ENCODE measurements at regions of chr1 and their contacts with region 1.

Region 1: DNA sequence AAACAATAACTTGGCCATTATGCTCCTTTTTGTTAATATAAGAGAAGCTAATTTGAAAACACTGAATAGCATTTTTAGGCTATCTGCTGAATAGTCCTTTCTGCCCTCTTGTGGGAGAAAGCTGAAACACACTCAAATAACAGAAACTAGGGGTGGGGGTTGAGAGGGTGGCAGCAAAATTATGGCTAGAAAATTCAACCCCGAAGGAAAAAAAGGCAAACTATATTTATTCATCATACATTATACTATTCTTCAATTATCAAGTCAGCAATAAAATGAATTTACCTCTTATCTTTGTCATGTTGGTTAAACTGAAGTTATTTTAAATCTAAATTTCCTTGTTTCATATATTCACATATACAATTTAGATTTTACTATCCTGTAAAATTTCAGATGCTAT is 255.9 kb downstream of the FAF1 start:
- DNase-seq: peak; percentile 58
- H3K4me3 ChIP-seq: no peak overlapping the region
- H3K27ac ChIP-seq: no peak overlapping the region
- H3K4me1 ChIP-seq: no peaks in the 10 kb centered on the region
- H3K27me3 ChIP-seq: no peaks in the 10 kb centered on the region
- CTCF ChIP-seq: peak; percentile 53 to 60
- POLR2A ChIP-seq: no peak

Region 2: DNA sequence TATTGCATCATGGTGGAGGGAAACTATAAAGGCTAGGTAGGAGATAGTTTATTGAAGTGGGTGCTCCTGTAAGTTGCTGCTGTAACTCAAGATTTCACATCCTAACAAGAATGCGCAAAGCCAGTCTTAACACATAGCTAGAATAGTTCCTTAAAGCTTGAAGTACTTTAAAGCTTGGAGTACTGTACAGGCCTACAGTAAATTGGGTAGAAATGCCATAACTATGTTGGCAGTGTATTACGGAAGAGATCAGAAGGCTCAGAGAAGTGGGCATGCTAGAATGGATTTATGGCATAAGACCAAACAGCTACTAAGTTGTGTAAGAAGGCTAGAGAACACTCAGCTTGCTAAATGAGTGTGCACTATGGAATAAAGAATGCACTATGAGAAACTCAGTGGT is 325.4 kb before region 1 on chr1:
- CTCF ChIA-PET with region 1: interaction called, 10 read pairs
- POLR2A ChIA-PET with region 1: no interaction called
- dilution Hi-C with region 1: no loop called
- intact Hi-C with region 1: no loop called
- DNase-seq: no peak
- H3K4me3 ChIP-seq: no peak overlapping the region
- H3K27ac ChIP-seq: no peak overlapping the region
- H3K4me1 ChIP-seq: no peaks in the 10 kb centered on the region
- H3K27me3 ChIP-seq: no peaks in the 10 kb centered on the region
- CTCF ChIP-seq: no peak
- POLR2A ChIP-seq: no peak

Region 3: GRCh38 chr1:50450861-50451653 is 253.1 kb before region 1 on chr1:
- CTCF ChIA-PET with region 1: no interaction called
- POLR2A ChIA-PET with region 1: no interaction called
- dilution Hi-C with region 1: no loop called
- intact Hi-C with region 1: no loop called
- DNase-seq: no peak
- H3K4me3 ChIP-seq: no peak overlapping the region
- H3K27ac ChIP-seq: no peak overlapping the region
- H3K4me1 ChIP-seq: no peaks in the 10 kb centered on the region
- H3K27me3 ChIP-seq: no peaks in the 10 kb centered on the region
- CTCF ChIP-seq: no peak
- POLR2A ChIP-seq: no peak

Region 4: DNA sequence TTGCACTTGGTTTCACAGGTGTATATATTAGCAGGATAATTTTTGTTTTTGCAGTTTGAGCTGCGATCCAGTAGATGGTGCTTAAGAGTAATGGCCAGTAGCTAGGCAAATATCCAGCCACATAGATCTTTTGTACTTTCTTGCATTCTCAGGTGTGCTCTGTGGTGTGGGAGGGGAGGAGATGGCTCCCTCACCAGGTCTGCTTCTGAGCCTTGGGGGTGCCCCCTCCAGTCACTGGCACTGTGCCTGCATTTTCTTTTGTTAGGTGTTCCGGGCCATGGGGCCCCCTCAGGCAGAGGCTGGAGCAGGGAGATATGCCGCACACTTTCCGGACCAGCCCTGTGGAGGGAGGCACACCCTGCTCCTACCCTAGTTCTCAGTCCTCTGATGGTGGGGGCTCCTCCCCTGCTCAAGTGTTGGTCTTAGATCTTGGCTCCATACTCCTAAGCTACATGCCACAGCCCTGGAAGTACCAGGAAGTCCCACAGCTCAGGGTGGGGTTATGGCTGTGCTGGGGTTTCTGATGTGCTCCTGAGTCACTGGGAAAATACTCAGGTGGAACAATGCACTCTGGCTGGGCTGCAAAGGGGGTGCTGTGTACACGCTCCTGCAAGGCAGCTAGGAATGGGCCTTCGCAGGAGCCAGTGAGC is 83.3 kb before region 1 on chr1:
- CTCF ChIA-PET with region 1: interaction called, 142 read pairs
- POLR2A ChIA-PET with region 1: no interaction called
- dilution Hi-C with region 1: no loop called
- intact Hi-C with region 1: loop called (anchors 1 kb)
- DNase-seq: peak; percentile 42
- H3K4me3 ChIP-seq: no peak overlapping the region
- H3K27ac ChIP-seq: no peak overlapping the region
- H3K4me1 ChIP-seq: no peaks in the 10 kb centered on the region
- H3K27me3 ChIP-seq: no peaks in the 10 kb centered on the region
- CTCF ChIP-seq: peak; percentile 26 to 54
- POLR2A ChIP-seq: no peak

Region 5: GRCh38 chr1:50719126-50719525 is 15.0 kb after region 1 on chr1:
- CTCF ChIA-PET with region 1: interaction called, 12 read pairs
- POLR2A ChIA-PET with region 1: no interaction called
- dilution Hi-C with region 1: no loop called
- intact Hi-C with region 1: no loop called
- DNase-seq: no peak
- H3K4me3 ChIP-seq: no peak overlapping the region
- H3K27ac ChIP-seq: no peak overlapping the region
- H3K4me1 ChIP-seq: no peaks in the 10 kb centered on the region
- H3K27me3 ChIP-seq: no peaks in the 10 kb centered on the region
- CTCF ChIP-seq: no peak
- POLR2A ChIP-seq: no peak